ENCODE measurements at regions of chr3 and their contacts with region 1.

Region 1: GRCh38 chr3:115169808-115170207 is 22.7 kb upstream of the ZBTB20 start:
- DNase-seq: no peak
- H3K4me3 Mint-ChIP-seq: no peak overlapping the region
- H3K27ac Mint-ChIP-seq: no peak overlapping the region
- H3K4me1 Mint-ChIP-seq: peaks cover 12% of the 10 kb centered on the region
- H3K27me3 Mint-ChIP-seq: no peaks in the 10 kb centered on the region

Region 2: DNA sequence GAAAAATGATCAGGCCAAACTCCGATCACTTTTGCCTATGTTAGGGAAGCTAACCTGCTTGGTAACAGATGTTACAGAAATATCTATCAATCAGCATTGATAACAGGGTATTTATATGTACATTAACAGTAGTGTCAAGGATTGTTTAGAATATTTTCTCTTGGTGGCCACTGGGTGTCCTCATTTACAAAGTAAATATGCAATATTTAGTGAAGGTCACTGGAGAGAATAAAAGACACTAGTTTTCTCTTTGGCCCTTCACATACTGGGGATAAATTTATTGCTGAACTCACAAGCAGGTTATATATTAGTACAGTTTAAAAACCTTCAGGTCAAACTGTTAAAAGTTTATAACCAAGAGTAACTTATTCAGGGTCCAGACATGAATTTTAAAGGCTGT is 807.0 kb before region 1 on chr3:
- CTCF ChIA-PET with region 1: no interaction called
- intact Hi-C with region 1: loop called (anchors 2 kb)
- DNase-seq: no peak
- H3K4me3 Mint-ChIP-seq: no peak overlapping the region
- H3K27ac Mint-ChIP-seq: no peak overlapping the region
- H3K4me1 Mint-ChIP-seq: peaks cover 2% of the 10 kb centered on the region
- H3K27me3 Mint-ChIP-seq: no peaks in the 10 kb centered on the region

Region 3: DNA sequence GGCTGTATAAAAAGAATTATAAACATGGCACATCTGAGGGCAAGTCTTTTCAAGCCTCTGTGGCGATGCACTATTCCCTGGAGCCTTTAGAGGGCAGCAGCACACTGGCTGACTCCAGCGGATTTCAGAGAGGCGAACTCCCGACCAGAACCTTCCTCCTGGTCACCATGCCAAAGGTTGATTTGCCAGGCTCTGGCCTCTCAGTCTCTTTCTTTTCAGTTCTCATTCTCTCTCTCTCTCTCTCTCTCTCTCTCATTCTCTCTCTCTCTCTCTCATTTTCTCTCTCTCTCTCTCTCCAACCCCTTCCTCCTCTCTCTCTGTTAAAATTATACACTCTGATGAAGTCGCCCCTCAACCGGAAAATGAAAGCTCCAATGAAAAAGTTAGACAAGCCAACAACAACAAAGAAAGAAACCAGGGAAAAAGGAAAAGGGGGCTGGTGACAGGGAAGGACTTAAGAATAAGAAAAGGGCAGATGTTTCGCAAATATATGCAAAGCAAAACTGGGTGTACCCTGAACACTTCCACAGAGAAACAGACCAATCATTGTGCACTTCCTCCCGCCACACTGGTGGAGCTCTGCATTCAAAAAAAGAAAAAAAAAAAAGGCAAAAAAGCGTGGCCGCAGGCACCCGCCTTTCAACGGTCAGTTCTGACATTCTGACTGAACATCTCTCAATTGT is 785.8 kb before region 1 on chr3:
- CTCF ChIA-PET with region 1: no interaction called
- intact Hi-C with region 1: loop called (anchors 2 kb)
- DNase-seq: peak; percentile 82
- H3K4me3 Mint-ChIP-seq: peak overlapping the region; percentile 70
- H3K27ac Mint-ChIP-seq: peak overlapping the region; percentile 67
- H3K4me1 Mint-ChIP-seq: peaks cover 13% of the 10 kb centered on the region
- H3K27me3 Mint-ChIP-seq: no peaks in the 10 kb centered on the region

Region 4: DNA sequence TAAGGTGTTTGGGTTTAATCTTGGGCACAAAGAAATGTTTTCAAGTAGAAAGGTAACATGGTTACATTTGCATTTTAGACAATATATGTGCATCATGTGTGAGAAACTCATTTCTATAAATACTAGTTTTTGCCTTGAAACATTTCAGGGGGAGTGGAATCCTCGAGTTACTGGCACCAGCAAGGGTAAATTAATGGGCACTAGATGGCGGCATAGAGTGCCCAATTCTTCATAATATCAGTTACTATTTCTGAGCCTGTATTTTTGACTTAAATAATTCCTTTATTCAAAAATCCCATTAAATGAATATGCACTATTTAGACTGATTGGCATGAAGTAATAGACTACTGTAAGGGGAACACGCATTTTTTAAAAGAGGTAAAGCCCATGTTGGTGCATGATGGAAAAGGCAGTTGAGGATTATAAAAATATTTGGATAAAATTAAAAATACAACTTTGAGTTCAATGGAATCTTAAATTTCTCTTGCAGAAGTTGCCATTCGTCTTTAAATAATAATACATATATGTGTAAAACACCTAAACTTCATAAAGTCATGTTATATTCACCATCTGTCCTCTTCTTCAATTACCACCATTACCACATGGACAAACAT is 129.0 kb before region 1 on chr3:
- CTCF ChIA-PET with region 1: interaction called, 5 read pairs
- intact Hi-C with region 1: loop called (anchors 1 kb)
- DNase-seq: peak; percentile 65
- H3K4me3 Mint-ChIP-seq: no peak overlapping the region
- H3K27ac Mint-ChIP-seq: no peak overlapping the region
- H3K4me1 Mint-ChIP-seq: peaks cover 16% of the 10 kb centered on the region
- H3K27me3 Mint-ChIP-seq: no peaks in the 10 kb centered on the region

Region 5: GRCh38 chr3:115284980-115285379 is 115.2 kb after region 1 on chr3:
- CTCF ChIA-PET with region 1: no interaction called
- intact Hi-C with region 1: no loop called
- DNase-seq: no peak
- H3K4me3 Mint-ChIP-seq: no peak overlapping the region
- H3K27ac Mint-ChIP-seq: no peak overlapping the region
- H3K4me1 Mint-ChIP-seq: peaks cover 2% of the 10 kb centered on the region
- H3K27me3 Mint-ChIP-seq: no peaks in the 10 kb centered on the region